ENCODE measurements at regions of chr5 and their contacts with region 1.

Region 1: DNA sequence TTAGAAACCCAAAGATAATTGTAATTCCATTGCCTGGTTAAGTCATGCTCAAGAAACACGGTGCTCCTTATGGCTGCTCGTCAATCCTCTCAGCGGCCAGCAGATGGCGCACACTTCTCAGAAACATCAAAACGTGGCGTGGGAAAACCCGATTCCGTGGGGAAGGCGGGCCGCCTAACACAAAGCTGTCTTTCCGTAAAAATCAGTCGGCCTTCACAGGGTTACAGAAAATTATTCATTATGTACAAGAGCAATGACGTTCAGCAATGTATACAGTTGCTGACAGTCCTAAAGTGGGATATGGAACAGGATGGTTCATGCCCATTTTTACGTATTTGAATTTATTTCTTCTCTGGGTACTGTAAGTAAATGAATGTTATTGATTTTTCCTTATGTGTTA is 83.5 kb downstream of the PDE4D start:
- DNase-seq: peak; percentile 68 to 69
- ATAC-seq: peak in 6 of 8 donors; percentile 46 to 76 (median 64)
- H3K4me3 ChIP-seq: peak overlapping the region in 1 of 10 donors; percentile 16
- H3K27ac ChIP-seq: no peak overlapping the region
- H3K4me1 ChIP-seq: peaks cover 0 to 4% (median 0%) of the 10 kb centered on the region in 9 donors
- H3K27me3 ChIP-seq: peaks cover 0 to 26% (median 6%) of the 10 kb centered on the region in 7 donors
- CTCF ChIP-seq: peak; percentile 79 to 98 (median 93)

Region 2: GRCh38 chr5:60092671-60093422 is 282.8 kb after region 1 on chr5:
- intact Hi-C with region 1: no loop called
- DNase-seq: no peak
- ATAC-seq: no peak
- H3K4me3 ChIP-seq: no peak overlapping the region
- H3K27ac ChIP-seq: no peak overlapping the region
- H3K4me1 ChIP-seq: no peaks in the 10 kb centered on the region
- H3K27me3 ChIP-seq: no peaks in the 10 kb centered on the region
- CTCF ChIP-seq: no peak

Region 3: GRCh38 chr5:60161340-60161934 is 351.4 kb after region 1 on chr5:
- intact Hi-C with region 1: loop called in 1 of 10 experiments (anchors 10 kb)
- DNase-seq: no peak
- ATAC-seq: no peak
- H3K4me3 ChIP-seq: no peak overlapping the region
- H3K27ac ChIP-seq: no peak overlapping the region
- H3K4me1 ChIP-seq: no peaks in the 10 kb centered on the region
- H3K27me3 ChIP-seq: no peaks in the 10 kb centered on the region
- CTCF ChIP-seq: peak in 6 of 9 donors; percentile 24 to 53 (median 32)

Region 4: GRCh38 chr5:60382716-60383115 is 572.7 kb after region 1 on chr5:
- intact Hi-C with region 1: loop called in 5 of 10 experiments (anchors 5 to 10 kb)
- DNase-seq: no peak
- ATAC-seq: no peak
- H3K4me3 ChIP-seq: no peak overlapping the region
- H3K27ac ChIP-seq: no peak overlapping the region
- H3K4me1 ChIP-seq: no peaks in the 10 kb centered on the region
- H3K27me3 ChIP-seq: no peaks in the 10 kb centered on the region
- CTCF ChIP-seq: peak in 5 of 9 donors; percentile 26 to 50 (median 31)

Region 5: GRCh38 chr5:60649283-60649917 is 839.4 kb after region 1 on chr5:
- intact Hi-C with region 1: loop called in 3 of 10 experiments (anchors 5 to 10 kb)
- DNase-seq: no peak
- ATAC-seq: no peak
- H3K4me3 ChIP-seq: no peak overlapping the region
- H3K27ac ChIP-seq: no peak overlapping the region
- H3K4me1 ChIP-seq: peaks cover 0 to 6% (median 0%) of the 10 kb centered on the region in 9 donors
- H3K27me3 ChIP-seq: no peaks in the 10 kb centered on the region
- CTCF ChIP-seq: peak in 8 of 9 donors; percentile 17 to 63 (median 52)

Region 6: DNA sequence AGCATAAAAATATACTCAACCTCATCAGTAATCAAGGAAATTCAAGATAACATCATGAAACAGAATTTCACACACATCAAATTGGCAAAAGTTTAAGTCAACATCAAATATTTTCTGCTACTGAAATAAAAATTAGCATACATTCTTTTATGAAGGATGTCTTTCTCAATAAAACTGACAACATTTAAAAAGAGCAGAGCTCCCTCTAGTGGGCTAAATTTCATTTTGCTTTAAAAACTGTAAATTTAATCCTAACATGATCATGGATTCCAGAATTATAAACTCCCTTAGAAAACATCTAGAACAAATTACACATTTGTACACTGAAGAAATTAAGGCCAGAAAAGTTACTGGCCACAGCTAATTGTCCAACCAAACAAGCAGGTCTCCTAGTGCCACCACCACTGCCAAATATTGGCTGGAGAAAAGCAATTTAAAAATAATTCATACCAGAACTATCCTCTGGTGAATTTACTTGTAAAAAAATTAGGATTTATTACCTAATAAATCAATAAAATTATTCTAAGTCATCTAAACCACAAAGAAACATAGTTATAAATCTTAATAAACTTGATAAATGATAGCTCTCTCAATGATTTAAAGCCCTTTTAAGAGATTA is 858.8 kb after region 1 on chr5:
- intact Hi-C with region 1: loop called in 9 of 10 experiments (anchors 1 to 10 kb)
- DNase-seq: no peak
- ATAC-seq: no peak
- H3K4me3 ChIP-seq: no peak overlapping the region
- H3K27ac ChIP-seq: no peak overlapping the region
- H3K4me1 ChIP-seq: peaks cover 0 to 4% (median 0%) of the 10 kb centered on the region in 9 donors
- H3K27me3 ChIP-seq: no peaks in the 10 kb centered on the region
- CTCF ChIP-seq: peak; percentile 45 to 74 (median 67)

Measured in heart right ventricle (tissue), 16 donors.